Activated naive CD4-positive, alpha-beta T cell treated with anti-CD3 and anti-CD28 coated beads, Interleukin-2, amount 10 ng/mL, durations not matched to agents 7 days and 5 days (primary cell): ENCODE measurements at regions of chr12 and their contacts with region 1.

Region 1: DNA sequence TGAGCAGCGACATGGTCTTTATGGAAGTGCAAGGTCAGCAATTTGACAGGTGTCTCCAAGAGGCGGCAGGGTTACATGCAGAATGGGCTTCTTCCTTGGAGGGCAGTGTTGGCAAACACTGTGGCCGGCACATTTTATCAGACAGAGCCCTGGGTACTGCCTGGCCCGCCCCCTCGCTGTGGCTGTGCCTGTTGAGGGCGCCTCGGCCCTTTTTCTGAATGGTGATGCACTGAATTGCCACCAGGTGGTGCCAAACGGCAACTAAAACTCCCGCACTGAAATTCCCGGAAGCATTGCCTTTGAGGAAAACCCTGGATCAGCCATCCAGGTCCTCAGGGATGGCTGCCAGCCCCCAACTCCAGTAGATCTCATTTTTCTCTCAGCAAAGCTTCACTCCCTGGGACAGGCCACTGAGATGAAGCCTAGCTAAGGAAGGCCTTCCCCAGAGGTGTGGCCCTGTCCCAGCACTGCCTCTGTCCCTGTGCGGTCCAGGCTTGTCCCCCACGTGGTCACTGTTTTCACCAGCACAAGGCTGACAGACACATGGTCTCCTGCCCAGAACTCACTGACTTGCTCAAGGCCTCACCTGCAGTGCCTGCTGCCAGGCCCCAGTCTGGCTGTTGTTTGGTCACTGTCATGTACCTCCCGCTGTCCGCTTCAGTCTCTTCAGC is 73.6 kb downstream of the TESC start:
- DNase-seq: peak; percentile 60
- H3K4me3 Mint-ChIP-seq: no peak overlapping the region
- H3K27ac Mint-ChIP-seq: no peak overlapping the region
- H3K4me1 Mint-ChIP-seq: peaks cover 2% of the 10 kb centered on the region
- H3K27me3 Mint-ChIP-seq: no peaks in the 10 kb centered on the region

Region 2: DNA sequence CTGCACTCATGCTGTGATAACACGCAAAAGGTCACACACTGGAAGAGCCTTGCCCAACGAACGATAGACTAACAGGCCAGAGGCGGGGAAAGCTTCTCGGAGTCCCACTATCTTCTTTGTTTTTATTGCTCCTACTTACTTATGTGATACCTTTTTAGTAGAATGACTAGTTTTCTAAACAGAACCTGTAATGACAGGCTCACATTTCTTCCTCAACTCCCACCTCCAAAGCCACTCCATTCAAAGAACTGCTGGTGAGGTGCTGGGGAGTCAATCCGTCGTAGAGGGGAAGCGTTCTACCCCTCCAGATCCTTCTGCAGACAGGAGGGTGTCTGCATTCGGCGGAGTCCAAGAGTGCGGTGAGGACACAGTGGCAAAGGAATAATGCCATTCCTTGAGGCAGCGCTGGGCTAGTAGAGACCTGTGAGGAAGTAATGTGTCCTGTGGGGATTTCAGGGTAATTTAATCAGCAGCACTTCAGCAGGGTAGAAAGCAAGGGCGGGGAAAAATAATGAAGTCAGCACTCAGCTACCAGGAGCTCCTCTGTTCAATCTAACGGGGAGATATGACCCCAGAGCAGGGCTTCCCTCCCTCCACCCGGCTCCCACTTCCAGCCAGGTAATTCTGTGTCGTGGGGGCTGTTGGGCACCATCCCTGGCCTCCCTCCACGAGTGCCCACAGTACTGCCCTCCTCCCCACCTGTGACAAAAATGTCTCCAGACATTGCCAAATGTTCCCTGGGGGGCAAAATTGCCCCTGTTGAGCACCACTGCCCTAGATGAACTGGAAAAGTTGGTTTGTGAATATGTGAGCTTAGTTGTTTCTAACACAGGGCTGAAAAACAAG is 312.9 kb before region 1 on chr12:
- CTCF ChIA-PET with region 1: no interaction called
- DNase-seq: no peak
- H3K4me3 Mint-ChIP-seq: no peak overlapping the region
- H3K27ac Mint-ChIP-seq: no peak overlapping the region
- H3K4me1 Mint-ChIP-seq: peaks cover 7% of the 10 kb centered on the region
- H3K27me3 Mint-ChIP-seq: peaks cover 22% of the 10 kb centered on the region

Region 3: GRCh38 chr12:117134059-117134458 is 108.4 kb after region 1 on chr12:
- CTCF ChIA-PET with region 1: interaction called, 23 read pairs
- DNase-seq: peak; percentile 71
- H3K4me3 Mint-ChIP-seq: no peak overlapping the region
- H3K27ac Mint-ChIP-seq: peak overlapping the region; percentile 77
- H3K4me1 Mint-ChIP-seq: peaks cover 21% of the 10 kb centered on the region
- H3K27me3 Mint-ChIP-seq: peaks cover 5% of the 10 kb centered on the region